Activated CD4-positive, alpha-beta memory T cell treated with anti-CD3 and anti-CD28 coated beads, Interleukin-2, amount 10 ng/mL, durations not matched to agents 7 days and 5 days (primary cell): ENCODE measurements at regions of chr7 and their contacts with region 1.

Region 1: GRCh38 chr7:100132697-100133151 is 6.0 kb downstream of the MBLAC1 start:
- DNase-seq: peak; percentile 75
- H3K4me3 Mint-ChIP-seq: no peak overlapping the region
- H3K27ac Mint-ChIP-seq: no peak overlapping the region
- H3K4me1 Mint-ChIP-seq: peaks cover 22% of the 10 kb centered on the region
- H3K27me3 Mint-ChIP-seq: peaks cover 3% of the 10 kb centered on the region

Region 2: DNA sequence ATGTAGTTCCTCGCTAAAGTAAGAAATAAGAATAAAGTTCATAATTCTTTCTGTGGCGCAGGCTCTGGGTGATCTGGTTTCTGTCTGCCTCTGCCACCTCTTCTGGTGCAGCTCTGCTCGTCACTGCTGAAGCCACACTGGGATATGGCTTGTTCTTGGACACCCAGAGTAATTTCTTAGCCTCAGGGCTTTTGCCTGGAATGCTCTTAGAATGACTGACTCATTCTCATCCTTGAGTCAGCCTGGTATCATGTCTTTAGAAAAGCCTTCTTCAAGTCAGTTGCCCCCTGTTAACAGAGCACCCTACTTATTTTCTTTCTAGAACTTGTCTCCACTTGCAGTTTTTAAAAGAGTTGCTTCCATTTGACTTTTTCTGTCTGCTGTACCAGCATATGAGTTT is 514.0 kb before region 1 on chr7:
- CTCF ChIA-PET with region 1: no interaction called
- POLR2A ChIA-PET with region 1: no interaction called
- DNase-seq: no peak
- H3K4me3 Mint-ChIP-seq: peak overlapping the region; percentile 89
- H3K27ac Mint-ChIP-seq: no peak overlapping the region
- H3K4me1 Mint-ChIP-seq: peaks cover 69% of the 10 kb centered on the region
- H3K27me3 Mint-ChIP-seq: peaks cover 2% of the 10 kb centered on the region

Region 3: DNA sequence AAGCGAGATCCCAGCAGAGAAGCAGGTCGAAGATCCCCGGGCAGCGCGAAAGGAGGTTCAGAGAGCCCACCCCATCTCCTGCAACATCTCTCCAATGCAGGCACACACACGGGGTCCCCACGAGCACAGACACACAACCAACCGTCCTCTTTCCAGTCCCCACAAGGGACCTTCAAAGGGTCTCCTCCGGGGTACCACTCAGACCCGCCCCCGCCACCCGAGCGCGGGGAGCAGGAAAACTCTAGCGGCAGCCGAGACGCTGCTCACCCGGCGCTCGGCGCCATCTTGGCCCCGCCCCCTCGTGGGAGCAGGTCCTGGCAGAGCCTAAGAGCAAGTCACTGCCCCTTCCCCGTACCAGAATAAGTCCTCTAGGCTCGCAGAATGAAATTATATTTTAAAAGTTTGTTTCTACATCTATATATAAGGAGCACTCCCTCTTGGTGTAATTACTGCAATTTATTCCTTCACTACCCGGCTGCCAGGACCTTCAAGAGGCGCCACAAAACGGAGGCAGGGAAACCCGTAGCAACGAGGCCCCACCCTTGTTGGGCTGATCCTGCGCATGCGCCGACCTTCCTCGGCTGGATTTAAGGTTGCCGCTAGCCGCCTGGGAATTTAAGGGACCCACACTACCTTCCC is 13.5 kb before region 1 on chr7 and contains the starts of genes CNPY4 and TAF6:
- CTCF ChIA-PET with region 1: interaction called, 11 read pairs
- POLR2A ChIA-PET with region 1: interaction called, 10 read pairs
- DNase-seq: peak; percentile 94
- H3K4me3 Mint-ChIP-seq: peak within 1 kb of the TSS; percentile 86
- H3K27ac Mint-ChIP-seq: peak within 1 kb of the TSS; percentile 82
- H3K4me1 Mint-ChIP-seq: peaks cover 30% of the 10 kb centered on the region
- H3K27me3 Mint-ChIP-seq: no peaks in the 10 kb centered on the region
- total RNA-seq, gene CNPY4: 31.3 to 32.5 TPM
- total RNA-seq, gene TAF6: 54.6 to 56.5 TPM

Region 4: DNA sequence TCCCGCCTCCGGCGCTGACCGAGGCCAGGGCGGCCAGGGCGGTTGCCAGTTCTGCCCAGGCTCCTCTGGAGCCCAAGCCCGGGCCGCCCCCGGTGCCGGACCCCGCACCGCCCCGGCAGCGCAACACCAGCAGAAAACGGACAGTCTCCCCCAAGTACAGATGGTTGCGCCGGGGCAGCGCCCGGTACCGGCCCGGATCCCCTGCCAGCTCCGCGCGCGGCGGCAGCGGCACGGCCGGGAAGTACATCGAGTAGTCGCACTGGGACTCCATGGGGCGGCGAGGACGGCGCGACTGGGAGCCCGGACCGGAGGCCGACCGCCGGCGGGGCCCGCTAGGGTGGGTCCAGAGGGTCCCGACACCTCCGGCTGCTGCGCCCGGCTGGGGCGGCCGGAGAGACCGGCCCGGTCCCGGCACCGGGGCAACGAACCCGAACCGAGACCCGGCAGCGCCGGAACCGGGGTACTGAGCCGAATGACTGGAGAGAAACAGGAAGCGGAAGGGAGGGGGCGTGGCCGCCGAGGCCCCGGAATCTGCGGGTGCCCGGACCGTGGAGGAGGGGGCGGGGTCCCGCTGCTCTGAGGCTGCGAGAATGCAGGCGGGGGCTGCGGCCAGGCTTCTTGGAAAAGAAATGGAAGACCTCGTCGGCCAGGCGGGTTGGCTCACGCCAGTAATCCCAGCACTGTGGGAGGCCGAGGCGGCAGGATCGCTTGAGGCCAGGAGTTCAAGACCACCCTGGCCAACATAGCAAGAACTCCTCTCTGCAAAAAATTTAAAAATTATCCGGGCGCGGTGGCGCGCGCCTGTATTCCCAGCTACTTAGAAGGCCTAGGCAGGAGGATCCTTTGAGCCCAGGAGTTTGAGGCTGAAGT is 25.7 kb after region 1 on chr7 and contains the start of gene TRAPPC14:
- CTCF ChIA-PET with region 1: interaction called, 11 read pairs
- POLR2A ChIA-PET with region 1: interaction called, 6 read pairs
- DNase-seq: peak; percentile 93
- H3K4me3 Mint-ChIP-seq: peak within 1 kb of the TSS; percentile 78
- H3K27ac Mint-ChIP-seq: peak within 1 kb of the TSS; percentile 75
- H3K4me1 Mint-ChIP-seq: peaks cover 59% of the 10 kb centered on the region
- H3K27me3 Mint-ChIP-seq: no peaks in the 10 kb centered on the region
- total RNA-seq, gene TRAPPC14: 37.8 to 41.2 TPM

Region 5: DNA sequence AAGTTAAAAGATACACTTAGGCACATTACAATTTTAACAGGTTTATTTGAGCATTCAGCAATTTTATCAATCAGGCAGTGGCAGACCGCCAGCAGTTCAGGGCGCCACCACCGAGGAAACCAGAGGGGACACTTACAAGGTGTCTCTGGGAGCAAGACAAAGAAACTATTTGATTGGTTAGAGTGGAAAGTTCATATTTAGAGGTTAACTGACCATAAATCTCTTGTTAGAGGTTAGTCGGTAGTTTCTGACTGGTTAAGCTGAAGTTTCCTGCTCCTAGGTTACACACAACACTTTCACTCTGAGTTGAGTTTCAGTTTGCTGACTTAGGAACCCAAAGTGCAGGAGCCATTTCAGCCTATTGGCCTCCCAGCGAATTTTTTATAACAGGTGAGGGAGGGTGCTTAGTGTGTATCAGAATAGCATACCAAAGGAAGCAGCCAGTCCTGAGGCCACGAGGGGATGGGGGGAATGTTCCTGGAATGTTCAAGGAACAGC is 76.2 kb after region 1 on chr7:
- CTCF ChIA-PET with region 1: interaction called, 15 read pairs
- POLR2A ChIA-PET with region 1: interaction called, 6 read pairs
- DNase-seq: peak; percentile 72
- H3K4me3 Mint-ChIP-seq: peak overlapping the region; percentile 40
- H3K27ac Mint-ChIP-seq: peak overlapping the region; percentile 68
- H3K4me1 Mint-ChIP-seq: peaks cover 44% of the 10 kb centered on the region
- H3K27me3 Mint-ChIP-seq: no peaks in the 10 kb centered on the region

Region 6: GRCh38 chr7:100407285-100408180 is 274.8 kb after region 1 on chr7:
- CTCF ChIA-PET with region 1: interaction called, 15 read pairs
- POLR2A ChIA-PET with region 1: interaction called, 5 read pairs
- DNase-seq: peak; percentile 28
- H3K4me3 Mint-ChIP-seq: no peak overlapping the region
- H3K27ac Mint-ChIP-seq: no peak overlapping the region
- H3K4me1 Mint-ChIP-seq: peaks cover 2% of the 10 kb centered on the region
- H3K27me3 Mint-ChIP-seq: peaks cover 21% of the 10 kb centered on the region